Tibial artery (tissue), 4 donors: ENCODE measurements at regions of chr20 and their contacts with region 1.

Region 1: GRCh38 chr20:17504898-17505635 is 26.1 kb downstream of the BFSP1 start:
- DNase-seq: peak; percentile 49 to 78
- H3K4me3 ChIP-seq: peak overlapping the region; percentile 52 to 57
- H3K27ac ChIP-seq: peak overlapping the region; percentile 42 to 55
- H3K4me1 ChIP-seq: peaks cover 0 to 13% (median 10%) of the 10 kb centered on the region in 4 donors
- H3K27me3 ChIP-seq: no peaks in the 10 kb centered on the region
- CTCF ChIP-seq: peak; percentile 66 to 71

Region 2: DNA sequence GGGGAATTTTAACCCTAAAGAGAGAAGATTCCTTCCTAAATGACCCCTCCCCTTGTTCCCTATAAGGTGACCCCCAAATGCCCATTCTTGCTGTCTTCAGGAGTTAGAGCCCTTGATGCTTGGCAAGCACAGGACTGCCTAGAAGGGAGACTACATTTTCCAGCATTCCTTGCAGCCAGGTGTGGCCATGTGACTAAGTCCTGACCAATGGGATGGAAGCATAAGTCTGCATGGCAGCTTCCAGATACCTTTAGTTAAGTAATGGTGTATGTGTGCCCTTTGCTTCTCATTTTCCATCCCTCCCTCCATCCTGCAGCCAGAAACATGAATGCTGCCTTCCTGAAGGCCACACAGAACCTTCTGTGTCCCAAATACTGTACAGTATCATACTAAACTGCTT is 20.6 kb after region 1 on chr20:
- intact Hi-C with region 1: no loop called
- DNase-seq: no peak
- H3K4me3 ChIP-seq: no peak overlapping the region
- H3K27ac ChIP-seq: no peak overlapping the region
- H3K4me1 ChIP-seq: peaks cover 0 to 3% (median 0%) of the 10 kb centered on the region in 4 donors
- H3K27me3 ChIP-seq: no peaks in the 10 kb centered on the region
- CTCF ChIP-seq: no peak

Region 3: DNA sequence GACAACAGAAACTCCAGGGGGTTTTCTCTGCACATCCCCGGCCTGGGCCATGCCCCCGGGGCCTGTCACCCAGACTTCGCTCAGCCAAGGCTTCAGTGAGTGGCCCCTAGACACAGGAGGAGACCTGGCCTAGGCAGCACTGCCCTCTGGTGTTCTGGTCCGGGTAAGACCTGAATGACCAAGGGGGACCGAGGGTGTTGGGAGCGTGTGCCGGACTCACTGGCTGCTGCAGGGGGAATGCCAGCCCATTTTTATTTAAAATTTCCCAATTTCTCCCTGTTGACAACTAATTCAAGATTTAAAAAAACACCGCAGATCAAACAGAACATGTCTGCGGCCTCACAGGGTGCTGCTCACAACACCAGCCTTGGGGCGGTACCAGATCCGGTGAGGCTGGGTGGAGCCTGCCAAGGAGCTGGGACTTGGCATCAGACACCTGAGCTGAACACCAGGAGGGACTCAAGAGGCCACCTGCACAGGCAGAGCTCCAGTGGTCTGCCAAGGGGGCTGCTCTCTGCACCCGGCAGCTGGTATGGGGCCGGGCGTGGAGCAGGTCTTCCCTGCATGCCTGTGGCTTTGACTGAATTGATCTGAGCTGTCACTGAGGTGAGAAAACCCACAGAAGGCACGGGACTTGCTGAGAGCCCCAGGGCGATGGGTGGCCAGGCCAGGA is 112.6 kb after region 1 on chr20:
- intact Hi-C with region 1: loop called (anchors 2 kb)
- DNase-seq: peak; percentile 64 to 89
- H3K4me3 ChIP-seq: no peak overlapping the region
- H3K27ac ChIP-seq: peak overlapping the region in 1 of 2 donors; percentile 95
- H3K4me1 ChIP-seq: peaks cover 13 to 52% (median 43%) of the 10 kb centered on the region in 4 donors
- H3K27me3 ChIP-seq: no peaks in the 10 kb centered on the region
- CTCF ChIP-seq: peak; percentile 85 to 95

Region 4: GRCh38 chr20:17898548-17898994 is 393.5 kb after region 1 on chr20:
- intact Hi-C with region 1: loop called (anchors 5 kb)
- DNase-seq: peak; percentile 83 to 87
- H3K4me3 ChIP-seq: no peak overlapping the region
- H3K27ac ChIP-seq: no peak overlapping the region
- H3K4me1 ChIP-seq: peaks cover 0 to 24% (median 13%) of the 10 kb centered on the region in 4 donors
- H3K27me3 ChIP-seq: no peaks in the 10 kb centered on the region
- CTCF ChIP-seq: peak; percentile 92 to 93

Region 5: DNA sequence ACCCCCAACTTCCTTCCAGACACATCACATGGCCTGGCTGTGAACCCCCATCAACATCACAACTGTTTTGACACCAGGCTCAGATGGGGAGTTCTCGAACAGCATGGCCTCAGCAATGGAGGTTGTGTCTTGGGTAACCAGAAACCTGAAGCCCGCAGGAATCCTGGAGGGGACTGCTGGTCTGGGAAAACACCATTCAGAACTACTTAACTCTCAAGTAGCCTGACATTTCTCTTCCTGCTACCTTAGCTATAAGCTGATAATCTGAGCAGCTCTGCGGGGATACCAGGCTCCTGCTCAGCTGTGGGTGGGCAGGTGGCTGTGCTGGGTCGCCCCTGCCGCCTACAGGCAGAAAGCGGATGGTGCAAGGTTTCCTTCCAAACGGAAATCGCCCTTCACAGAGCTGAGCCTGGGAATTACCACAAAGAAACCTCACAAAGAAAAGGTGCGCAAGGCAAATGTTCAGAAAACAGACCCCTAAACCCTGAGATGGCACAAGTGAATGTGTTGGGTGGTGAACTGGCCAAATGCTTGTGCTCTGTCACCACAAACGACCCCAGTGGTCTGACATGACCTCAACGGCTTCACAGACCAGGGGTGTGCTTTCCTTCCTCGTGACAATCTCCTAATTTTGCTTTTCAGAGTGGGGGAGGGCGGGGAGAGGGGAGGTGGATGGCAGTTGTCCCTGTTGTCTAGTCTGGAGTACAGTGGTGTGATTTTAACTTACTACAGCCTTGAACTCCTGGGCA is 434.0 kb after region 1 on chr20:
- intact Hi-C with region 1: loop called (anchors 10 kb)
- DNase-seq: peak; percentile 58 to 83
- H3K4me3 ChIP-seq: no peak overlapping the region
- H3K27ac ChIP-seq: peak overlapping the region; percentile 61 to 67
- H3K4me1 ChIP-seq: peaks cover 0 to 37% (median 33%) of the 10 kb centered on the region in 4 donors
- H3K27me3 ChIP-seq: no peaks in the 10 kb centered on the region
- CTCF ChIP-seq: peak; percentile 86 to 90

Region 6: GRCh38 chr20:17995967-17996819 is 491.1 kb after region 1 on chr20:
- intact Hi-C with region 1: loop called (anchors 10 kb)
- DNase-seq: no peak
- H3K4me3 ChIP-seq: no peak overlapping the region
- H3K27ac ChIP-seq: no peak overlapping the region
- H3K4me1 ChIP-seq: peaks cover 0 to 8% (median 2%) of the 10 kb centered on the region in 4 donors
- H3K27me3 ChIP-seq: no peaks in the 10 kb centered on the region
- CTCF ChIP-seq: peak; percentile 91 to 96